ENCODE measurements at regions of chr15 and their contacts with region 1.

Region 1: GRCh38 chr15:89845305-89845893 is 30.7 kb upstream of the ANPEP start:
- DNase-seq: no peak
- H3K4me3 ChIP-seq: no peak overlapping the region
- H3K4me3 Mint-ChIP-seq: no peak overlapping the region
- H3K27ac ChIP-seq: no peak overlapping the region
- H3K27ac Mint-ChIP-seq: peak overlapping the region in 3 of 7 donors; percentile 9 to 82 (median 48)
- H3K4me1 ChIP-seq: peaks cover 38 to 45% of the 10 kb centered on the region in 2 donors
- H3K4me1 Mint-ChIP-seq: peaks cover 58% of the 10 kb centered on the region
- H3K27me3 ChIP-seq: no peaks in the 10 kb centered on the region
- H3K27me3 Mint-ChIP-seq: no peaks in the 10 kb centered on the region
- CTCF ChIP-seq: no peak

Region 2: DNA sequence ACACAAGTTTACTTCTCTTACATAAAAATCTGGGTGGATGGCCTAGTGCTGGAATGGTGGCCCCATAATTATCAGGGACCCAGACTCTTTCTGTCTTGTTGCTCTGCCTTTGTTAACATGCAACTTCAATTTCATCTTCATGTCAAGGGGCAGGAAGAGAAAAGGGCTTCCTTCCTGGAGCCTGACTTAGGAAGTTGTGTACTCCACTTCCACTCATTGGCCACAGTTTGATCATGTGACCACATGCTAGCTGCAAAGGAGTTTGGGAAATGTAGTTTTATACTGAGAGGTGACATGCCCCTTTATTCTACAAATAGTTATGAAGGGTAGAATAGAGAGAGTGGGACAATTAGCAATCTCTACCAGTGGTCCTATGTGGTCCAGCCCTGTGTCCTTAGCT is 388.3 kb before region 1 on chr15:
- intact Hi-C with region 1: no loop called
- DNase-seq: no peak
- H3K4me3 ChIP-seq: no peak overlapping the region
- H3K4me3 Mint-ChIP-seq: no peak overlapping the region
- H3K27ac ChIP-seq: no peak overlapping the region
- H3K27ac Mint-ChIP-seq: no peak overlapping the region
- H3K4me1 ChIP-seq: no peaks in the 10 kb centered on the region
- H3K4me1 Mint-ChIP-seq: no peaks in the 10 kb centered on the region
- H3K27me3 ChIP-seq: peaks cover 0 to 8% of the 10 kb centered on the region in 2 donors
- H3K27me3 Mint-ChIP-seq: peaks cover 13 to 38% (median 14%) of the 10 kb centered on the region in 3 donors
- CTCF ChIP-seq: no peak

Region 3: DNA sequence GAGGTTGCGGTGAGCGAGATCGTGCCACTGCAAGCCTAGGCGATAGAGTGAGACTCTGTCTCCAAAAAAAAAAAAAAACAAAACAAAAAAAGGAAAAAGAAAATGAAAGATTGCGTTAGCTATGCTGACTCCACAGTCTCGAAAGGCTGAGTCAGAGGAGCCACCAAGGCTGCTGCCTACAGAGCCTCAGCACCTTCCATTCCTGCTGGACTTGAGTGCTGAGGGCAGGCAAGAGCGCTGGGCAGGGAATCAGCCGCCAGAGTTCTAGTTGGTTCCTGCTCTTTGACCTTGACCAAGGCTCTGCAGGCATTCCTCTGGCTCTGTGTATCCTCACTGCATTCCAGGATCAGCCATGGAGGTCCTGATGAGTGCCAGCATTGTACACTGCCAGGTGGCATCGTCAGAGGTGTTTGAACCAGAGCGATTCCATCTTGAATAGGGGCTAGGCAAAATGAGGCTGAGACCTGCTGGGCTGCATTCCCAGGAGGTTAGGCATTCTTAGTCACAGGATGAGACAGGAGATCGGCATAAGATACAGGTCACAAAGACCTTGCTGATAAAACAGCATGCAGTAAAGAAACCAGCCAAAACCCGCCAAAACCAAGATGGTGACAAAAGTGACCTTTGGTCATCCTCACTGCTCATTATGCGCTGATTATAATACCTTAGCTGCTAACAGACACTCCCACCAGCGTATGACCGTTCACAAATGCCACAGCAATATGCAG is 63.3 kb before region 1 on chr15:
- intact Hi-C with region 1: loop called in 1 of 2 experiments (anchors 5 kb)
- DNase-seq: peak; percentile 79 to 88 (median 81)
- H3K4me3 ChIP-seq: peak overlapping the region in 1 of 3 experiments; percentile 39
- H3K4me3 Mint-ChIP-seq: peak overlapping the region; percentile 11 to 62
- H3K27ac ChIP-seq: peak overlapping the region; percentile 36 to 78
- H3K27ac Mint-ChIP-seq: peak overlapping the region; percentile 84 to 96 (median 94)
- H3K4me1 ChIP-seq: peaks cover 28 to 43% of the 10 kb centered on the region in 2 donors
- H3K4me1 Mint-ChIP-seq: peaks cover 37% of the 10 kb centered on the region
- H3K27me3 ChIP-seq: peaks cover 0 to 2% of the 10 kb centered on the region in 2 donors
- H3K27me3 Mint-ChIP-seq: peaks cover 2 to 7% (median 6%) of the 10 kb centered on the region in 3 donors
- CTCF ChIP-seq: no peak

Measured in CD14-positive monocyte (primary cell).